ENCODE measurements at regions of chr7 and their contacts with region 1.

Region 1: DNA sequence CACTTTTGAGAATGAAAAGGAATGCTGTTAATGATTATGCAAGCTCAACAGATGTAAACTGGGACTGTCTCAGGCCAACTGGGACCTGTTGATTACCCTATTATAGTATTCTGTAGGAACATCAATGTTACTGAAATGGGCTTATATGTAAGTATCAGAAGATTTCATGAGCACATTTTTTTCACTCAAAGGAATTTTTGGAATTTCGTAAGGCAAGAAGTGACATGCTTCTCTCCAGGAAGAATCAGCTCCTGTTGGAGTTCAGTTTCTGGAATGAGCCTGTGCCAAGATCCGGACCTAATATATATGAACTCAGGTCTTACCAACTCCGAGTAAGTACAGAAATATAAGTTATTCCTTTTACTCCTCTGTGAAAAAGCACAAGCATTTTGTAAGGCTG is 19.2 kb downstream of the NIPSNAP2 start:
- DNase-seq: peak; percentile 11
- H3K4me3 Mint-ChIP-seq: no peak overlapping the region
- H3K27ac Mint-ChIP-seq: peak overlapping the region; percentile 19
- H3K4me1 Mint-ChIP-seq: peaks cover 6% of the 10 kb centered on the region
- H3K27me3 Mint-ChIP-seq: no peaks in the 10 kb centered on the region
- CTCF ChIP-seq: no peak

Region 2: GRCh38 chr7:55546829-55547228 is 436.7 kb before region 1 on chr7:
- CTCF ChIA-PET with region 1: no interaction called
- POLR2A ChIA-PET with region 1: no interaction called
- intact Hi-C with region 1: no loop called
- DNase-seq: peak; percentile 97
- H3K4me3 Mint-ChIP-seq: peak overlapping the region; percentile 6
- H3K27ac Mint-ChIP-seq: no peak overlapping the region
- H3K4me1 Mint-ChIP-seq: peaks cover 46% of the 10 kb centered on the region
- H3K27me3 Mint-ChIP-seq: no peaks in the 10 kb centered on the region
- CTCF ChIP-seq: no peak

Region 3: DNA sequence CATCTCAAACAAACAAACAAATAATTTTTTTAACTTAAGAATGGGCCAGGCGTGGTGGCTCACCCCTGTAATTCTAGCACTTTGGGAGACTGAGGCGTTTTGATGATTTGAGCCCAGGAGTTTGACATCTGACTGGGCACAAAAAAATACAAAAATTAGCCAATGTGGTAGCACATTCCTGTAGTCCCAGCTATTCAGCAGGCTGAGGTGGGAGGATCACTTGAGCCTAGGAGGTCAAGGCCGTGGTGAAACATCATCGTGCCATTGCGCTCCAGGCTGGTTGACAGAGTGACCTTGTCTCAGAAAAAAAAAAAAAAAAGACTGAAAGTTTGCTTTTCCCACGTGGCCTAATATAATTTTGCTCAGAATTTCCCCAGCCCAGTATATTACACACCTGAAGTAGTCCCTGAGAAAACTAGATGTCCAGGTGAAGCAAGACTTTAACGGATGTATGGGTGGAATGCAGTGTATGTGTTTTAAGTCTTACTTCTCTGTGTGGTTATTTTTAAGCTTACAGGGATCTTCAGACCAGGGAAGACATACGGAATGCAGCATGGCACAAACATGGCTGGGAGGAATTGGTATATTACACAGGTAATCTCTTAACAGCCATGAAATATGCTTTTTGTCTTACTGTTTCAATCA is 13.4 kb after region 1 on chr7:
- CTCF ChIA-PET with region 1: interaction called, 4 read pairs
- POLR2A ChIA-PET with region 1: interaction called, 11 read pairs
- intact Hi-C with region 1: no loop called
- DNase-seq: no peak
- H3K4me3 Mint-ChIP-seq: no peak overlapping the region
- H3K27ac Mint-ChIP-seq: no peak overlapping the region
- H3K4me1 Mint-ChIP-seq: no peaks in the 10 kb centered on the region
- H3K27me3 Mint-ChIP-seq: no peaks in the 10 kb centered on the region
- CTCF ChIP-seq: no peak